ENCODE measurements at regions of chr6 and their contacts with region 1.

Region 1: DNA sequence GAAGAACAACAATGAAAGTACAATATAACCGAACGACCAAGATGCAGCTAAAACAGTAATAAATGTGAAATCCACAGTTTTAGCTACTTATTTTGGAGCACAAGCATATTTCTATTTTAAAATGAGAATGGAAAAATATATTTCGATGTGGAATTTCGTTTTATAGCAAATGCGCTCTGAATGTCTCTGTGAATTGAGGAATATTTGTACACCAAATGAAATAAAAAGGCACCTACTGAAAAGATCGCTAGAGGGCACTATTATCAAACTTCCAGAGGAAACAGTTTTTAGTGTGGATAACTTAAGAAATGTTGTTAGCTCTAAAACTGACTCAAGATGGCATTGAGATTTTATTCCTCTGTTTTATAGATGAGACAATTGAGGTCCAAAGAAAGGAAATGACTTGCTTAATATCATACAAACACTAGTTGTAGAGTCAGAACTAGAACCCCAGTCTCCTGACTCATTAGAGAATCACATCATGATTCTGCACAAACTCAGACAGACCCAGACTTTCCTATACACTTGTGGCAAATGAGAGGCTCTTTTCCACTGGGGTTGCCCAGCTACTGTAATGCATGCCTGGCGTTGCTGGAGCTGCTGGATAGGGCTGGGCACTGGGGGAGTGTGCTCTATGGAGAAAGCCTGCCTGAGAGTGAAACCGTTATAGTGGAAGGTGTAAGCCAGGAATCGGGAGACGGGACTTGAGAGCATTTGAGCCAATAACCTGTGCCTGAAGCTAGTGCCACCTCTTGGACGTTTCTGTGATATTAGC is 51.9 kb downstream of the GCLC start:
- DNase-seq: no peak
- H3K4me3 ChIP-seq: peak overlapping the region; percentile 31
- CTCF ChIP-seq: peak; percentile 35

Region 2: DNA sequence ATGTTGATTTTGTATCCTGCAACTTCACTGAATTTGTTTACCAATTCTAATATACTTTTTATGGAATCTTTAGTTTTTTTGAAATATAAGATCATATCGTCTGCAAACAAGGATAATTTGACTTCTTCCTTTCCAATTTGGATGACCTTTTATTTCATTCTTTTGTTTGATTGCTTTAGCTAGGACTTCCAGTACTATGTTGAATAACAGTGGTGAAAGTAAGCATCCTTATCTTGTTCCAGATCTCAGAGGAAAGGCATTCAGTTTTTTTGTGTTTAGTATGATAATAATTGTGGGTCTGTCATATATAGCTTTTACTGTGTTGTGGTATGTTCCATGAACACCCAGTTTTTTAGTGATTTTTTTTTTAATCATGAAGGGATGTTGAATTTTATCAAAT is 23.9 kb before region 1 on chr6:
- CTCF ChIA-PET with region 1: no interaction called
- POLR2A ChIA-PET with region 1: no interaction called
- DNase-seq: no peak
- H3K4me3 ChIP-seq: no peak overlapping the region
- CTCF ChIP-seq: no peak

Region 3: DNA sequence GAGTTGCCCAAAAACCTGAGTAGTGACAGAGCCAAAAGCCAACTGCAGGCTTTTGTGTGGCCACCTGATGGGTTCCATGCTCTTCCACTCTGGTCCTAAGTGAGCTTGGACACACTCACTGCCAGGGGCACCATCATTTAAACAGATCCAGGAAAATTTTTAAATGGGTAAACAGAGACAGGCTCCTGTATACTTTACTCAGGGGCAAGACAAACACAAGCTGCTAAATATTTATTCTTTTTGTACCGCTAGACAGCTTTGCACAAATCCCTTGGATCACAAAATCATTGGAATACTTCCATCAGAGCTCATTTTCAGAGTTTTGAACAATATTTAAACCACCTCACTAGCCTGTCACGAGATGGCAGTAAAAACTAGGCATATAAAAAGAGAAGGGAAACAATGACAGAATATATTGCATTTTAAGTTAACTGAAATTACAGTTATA is 20.5 kb after region 1 on chr6:
- CTCF ChIA-PET with region 1: interaction called, 17 read pairs
- POLR2A ChIA-PET with region 1: no interaction called
- DNase-seq: no peak
- H3K4me3 ChIP-seq: no peak overlapping the region
- CTCF ChIP-seq: no peak

Region 4: DNA sequence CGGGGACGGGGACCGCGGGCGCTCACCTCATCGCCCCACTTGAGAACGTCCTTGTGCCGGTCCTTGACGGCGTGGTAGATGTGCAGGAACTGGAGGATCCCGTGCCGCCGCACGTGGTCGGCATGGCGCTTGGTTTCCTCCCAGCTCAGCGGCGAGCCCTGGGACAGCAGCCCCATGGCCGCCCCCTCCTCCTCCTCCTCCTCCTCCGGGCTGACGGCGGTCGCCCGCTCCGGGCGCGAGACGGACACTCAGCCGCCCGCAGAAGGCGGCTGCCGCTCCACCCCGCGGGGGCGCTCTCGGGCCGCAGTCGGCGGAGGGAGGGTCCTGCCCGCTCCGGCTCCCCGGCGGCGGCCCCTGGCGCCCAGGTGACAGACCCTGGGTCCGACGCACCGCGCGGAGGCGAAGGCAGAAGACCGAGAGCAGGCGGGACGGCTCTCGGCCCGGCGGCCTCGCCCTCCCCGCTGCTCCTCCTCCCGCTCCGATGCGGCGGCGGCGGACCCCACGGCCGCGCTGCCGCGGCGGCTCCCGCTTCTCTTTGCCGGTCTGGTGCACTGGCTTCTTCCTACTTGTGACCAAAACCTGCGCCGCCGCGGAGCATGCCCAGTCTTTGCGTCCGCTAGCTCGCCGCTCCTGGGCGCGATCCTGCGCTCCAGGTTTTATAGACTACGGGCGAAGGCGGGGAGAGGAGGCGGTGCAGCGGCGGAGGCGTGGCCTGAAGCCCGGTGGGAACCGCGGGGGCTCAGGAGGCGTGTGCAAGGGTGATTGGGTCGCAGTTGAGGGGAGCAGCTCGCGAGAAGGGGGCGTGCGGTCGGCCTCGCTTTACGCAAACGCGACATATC is 51.6 kb after region 1 on chr6 and contains the start of gene GCLC:
- CTCF ChIA-PET with region 1: interaction called, 50 read pairs
- POLR2A ChIA-PET with region 1: interaction called, 13 read pairs
- DNase-seq: peak; percentile 71
- H3K4me3 ChIP-seq: peak within 1 kb of the TSS; percentile 85
- CTCF ChIP-seq: peak; percentile 66

Region 5: GRCh38 chr6:53651764-53652401 is 158.8 kb after region 1 on chr6:
- CTCF ChIA-PET with region 1: interaction called, 267 read pairs
- POLR2A ChIA-PET with region 1: no interaction called
- DNase-seq: no peak
- H3K4me3 ChIP-seq: peak overlapping the region; percentile 71
- CTCF ChIP-seq: peak; percentile 37

Region 6: GRCh38 chr6:53718597-53719460 is 225.8 kb after region 1 on chr6:
- CTCF ChIA-PET with region 1: interaction called, 432 read pairs
- POLR2A ChIA-PET with region 1: no interaction called
- DNase-seq: no peak
- H3K4me3 ChIP-seq: no peak overlapping the region
- CTCF ChIP-seq: peak; percentile 72